HAP-1 (cell line): ENCODE measurements at regions of chr17 and their contacts with region 1.

Region 1: DNA sequence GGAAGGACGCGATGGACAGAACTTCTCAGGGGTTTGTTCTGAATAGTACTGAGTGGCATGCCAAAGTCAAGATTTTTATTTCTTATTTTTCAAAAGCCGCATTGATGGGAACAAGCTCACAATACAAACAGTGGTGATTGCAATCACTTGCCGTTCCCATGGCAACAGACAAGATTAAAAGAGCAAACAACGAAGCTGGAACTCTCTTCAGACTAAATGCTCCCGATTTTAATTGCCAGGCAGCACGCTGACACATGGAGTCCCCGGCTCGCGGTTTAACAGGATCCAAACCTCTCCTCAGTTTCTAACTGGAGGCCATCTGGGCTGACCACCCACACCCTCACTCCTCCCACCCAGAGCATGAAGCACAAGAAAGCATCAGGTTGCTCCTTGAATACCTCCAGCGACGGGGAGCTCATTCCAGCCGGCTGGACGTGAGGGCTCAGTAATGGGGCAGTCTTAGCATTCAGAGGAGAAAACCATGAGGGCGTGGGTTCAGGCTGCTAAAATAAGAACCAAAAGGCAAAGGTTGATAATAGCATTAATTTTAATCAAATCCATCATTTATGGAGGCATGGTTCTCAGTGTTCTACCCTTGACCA is 41.5 kb downstream of the AIPL1 start:
- DNase-seq: peak; percentile 6 to 17
- H3K4me3 ChIP-seq: no peak overlapping the region
- H3K4me1 ChIP-seq: no peaks in the 10 kb centered on the region
- H3K27me3 ChIP-seq: 0 out of 2 replicates have a peak, but pooled peaks cover 2% of the 10 kb centered on the region

Region 2: DNA sequence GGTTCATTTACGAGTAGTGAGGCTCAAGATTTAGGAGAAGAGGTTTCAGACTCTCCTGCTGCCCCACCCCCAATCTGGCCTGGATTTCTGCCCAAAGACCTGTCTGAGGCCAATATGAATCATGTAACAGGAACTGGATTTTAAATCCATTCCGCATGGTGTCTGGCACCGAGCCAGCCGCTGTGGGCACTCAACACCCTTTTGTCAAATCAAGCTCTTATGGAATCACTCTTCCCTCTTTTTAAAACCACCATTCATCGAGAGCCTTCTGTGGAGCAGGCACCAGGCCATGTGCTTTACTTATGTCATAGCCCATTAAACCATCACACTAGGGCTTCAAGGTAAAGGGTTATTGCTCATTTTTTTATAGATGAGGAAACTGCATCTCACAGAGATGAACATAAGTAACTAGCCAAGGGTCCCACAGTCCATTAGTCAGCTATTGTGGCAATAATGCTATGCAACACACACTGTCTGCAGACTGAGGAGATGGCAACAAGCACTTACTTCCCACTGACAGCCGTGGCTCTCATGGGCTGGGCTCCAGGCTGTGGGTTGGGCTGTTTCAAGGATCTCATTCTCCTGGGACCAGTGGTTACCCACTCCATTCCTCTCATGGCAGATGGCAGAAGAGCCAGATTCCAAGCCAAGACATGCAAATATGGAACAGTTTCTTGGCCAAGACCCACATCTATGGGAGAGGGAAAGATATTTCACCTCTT is 229.7 kb before region 1 on chr17:
- in situ Hi-C with region 1: no loop called
- DNase-seq: no peak
- H3K4me3 ChIP-seq: no peak overlapping the region
- H3K4me1 ChIP-seq: no peaks in the 10 kb centered on the region
- H3K27me3 ChIP-seq: no peaks in the 10 kb centered on the region

Region 3: GRCh38 chr17:6334395-6334794 is 59.1 kb before region 1 on chr17:
- in situ Hi-C with region 1: loop called (anchors 10 kb)
- DNase-seq: no peak
- H3K4me3 ChIP-seq: no peak overlapping the region
- H3K4me1 ChIP-seq: no peaks in the 10 kb centered on the region
- H3K27me3 ChIP-seq: no peaks in the 10 kb centered on the region

Region 4: GRCh38 chr17:6517062-6517461 is 123.6 kb after region 1 on chr17:
- in situ Hi-C with region 1: no loop called
- DNase-seq: no peak
- H3K4me3 ChIP-seq: no peak overlapping the region
- H3K4me1 ChIP-seq: no peaks in the 10 kb centered on the region
- H3K27me3 ChIP-seq: 0 out of 2 replicates have a peak, but pooled peaks cover 2% of the 10 kb centered on the region